ENCODE measurements at regions of chr4 and their contacts with region 1.

Region 1: DNA sequence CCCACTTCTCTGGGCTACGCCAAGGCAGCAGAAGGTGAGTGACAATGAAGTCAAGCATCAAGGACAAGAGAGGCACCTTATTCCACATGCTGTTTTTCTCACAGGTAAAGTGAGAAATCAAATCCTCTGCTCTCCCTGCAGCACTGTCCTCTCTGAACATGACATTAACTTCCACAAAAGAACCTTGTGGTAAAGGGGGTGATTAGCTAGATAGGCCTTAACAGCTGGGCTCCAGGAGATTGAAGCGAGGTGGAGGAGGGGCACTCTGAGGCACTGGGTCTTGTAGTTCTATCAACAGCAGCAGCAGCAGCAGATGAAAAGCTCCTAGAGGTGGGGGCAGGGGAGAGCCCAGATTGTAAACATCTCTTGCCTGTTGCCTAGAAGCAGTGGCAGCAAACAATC is 96.8 kb upstream of the CXXC4 start:
- DNase-seq: no peak
- ATAC-seq: peak; percentile 81

Region 2: GRCh38 chr4:104500442-104500841 is 91.1 kb before region 1 on chr4:
- intact Hi-C with region 1: loop called (anchors 5 kb)
- DNase-seq: no peak
- ATAC-seq: peak; percentile 72

Region 3: GRCh38 chr4:104682311-104682710 is 90.8 kb after region 1 on chr4:
- intact Hi-C with region 1: no loop called
- DNase-seq: no peak
- ATAC-seq: no peak

Region 4: DNA sequence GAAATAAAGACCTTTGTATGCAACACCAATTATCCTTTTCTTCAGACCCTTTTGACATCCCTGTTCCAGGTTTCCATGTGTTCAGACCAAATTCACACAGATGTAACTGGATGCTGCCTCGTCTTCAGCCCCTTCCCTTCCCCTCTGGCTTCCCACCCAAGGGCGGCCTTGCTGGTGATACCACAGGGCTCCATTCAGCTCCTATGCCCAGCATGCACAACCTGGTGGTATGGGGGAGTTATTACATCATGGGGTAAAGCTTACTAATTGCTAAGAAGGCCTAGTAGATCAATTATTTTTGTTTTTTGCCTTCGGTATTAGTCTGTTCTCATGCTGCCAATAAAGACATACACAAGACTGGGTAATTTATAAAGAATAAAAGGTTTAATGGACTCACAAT is 220.2 kb after region 1 on chr4:
- intact Hi-C with region 1: no loop called
- DNase-seq: no peak
- ATAC-seq: no peak